ENCODE measurements at regions of chr2 and their contacts with region 1.

Region 1: DNA sequence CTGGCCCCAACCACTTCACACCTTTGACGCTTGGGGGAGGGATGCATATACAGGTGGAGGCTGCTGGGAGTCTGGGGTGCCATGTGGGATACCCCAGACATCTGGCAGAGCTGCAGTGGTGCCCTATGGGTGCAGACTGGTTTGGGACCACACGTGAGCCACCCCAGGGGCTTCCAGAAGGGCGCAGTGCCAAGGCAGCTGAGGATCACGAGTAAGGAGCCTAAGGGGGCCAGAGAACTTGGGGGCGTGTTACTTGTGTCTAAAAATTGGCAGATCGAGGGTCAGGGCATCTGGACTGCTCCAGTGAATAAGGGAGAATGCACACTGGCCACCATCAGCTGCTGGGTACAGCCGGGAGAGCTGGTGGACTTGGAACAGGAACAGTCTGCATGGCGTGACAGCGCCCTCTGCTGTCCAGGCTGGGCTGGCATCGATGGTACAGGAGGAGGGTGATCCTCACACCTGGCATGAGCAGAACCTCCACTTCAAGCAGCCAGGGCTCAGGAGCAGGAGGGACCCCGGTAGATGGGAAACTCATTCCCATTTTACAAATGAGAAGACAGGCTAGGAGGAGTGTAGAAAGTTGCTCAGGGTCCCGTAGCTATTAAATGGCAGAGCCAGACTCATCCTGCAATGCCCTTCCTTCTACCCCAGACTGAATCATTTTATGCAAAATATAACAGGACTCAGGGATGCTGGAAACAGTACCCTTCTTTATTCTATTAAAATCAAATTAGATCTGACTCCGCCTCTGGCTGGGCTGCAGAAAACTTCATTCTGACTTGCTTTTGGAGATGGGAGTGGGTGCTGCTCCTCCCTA is 60.4 kb downstream of the ATOH8 start:
- DNase-seq: peak; percentile 90 to 93 (median 91)
- ATAC-seq: peak; percentile 98 to 99 (median 99)
- H3K4me3 ChIP-seq: no peak overlapping the region
- H3K27ac ChIP-seq: no peak overlapping the region
- H3K4me1 ChIP-seq: peaks cover 0 to 4% (median 0%) of the 10 kb centered on the region in 4 donors
- H3K27me3 ChIP-seq: no peaks in the 10 kb centered on the region
- CTCF ChIP-seq: peak; percentile 96 to 98 (median 98)
- POLR2A ChIP-seq: no peak

Region 2: GRCh38 chr2:85635636-85636035 is 178.6 kb before region 1 on chr2:
- intact Hi-C with region 1: loop called in 1 of 2 experiments (anchors 10 kb)
- DNase-seq: no peak
- ATAC-seq: no peak
- H3K4me3 ChIP-seq: no peak overlapping the region
- H3K27ac ChIP-seq: no peak overlapping the region
- H3K4me1 ChIP-seq: no peaks in the 10 kb centered on the region
- H3K27me3 ChIP-seq: no peaks in the 10 kb centered on the region
- CTCF ChIP-seq: no peak
- POLR2A ChIP-seq: no peak

Region 3: GRCh38 chr2:85733121-85733960 is 80.9 kb before region 1 on chr2:
- intact Hi-C with region 1: loop called in 1 of 2 experiments (anchors 5 kb)
- DNase-seq: no peak
- ATAC-seq: no peak
- H3K4me3 ChIP-seq: no peak overlapping the region
- H3K27ac ChIP-seq: no peak overlapping the region
- H3K4me1 ChIP-seq: peaks cover 0 to 16% (median 7%) of the 10 kb centered on the region in 4 donors
- H3K27me3 ChIP-seq: no peaks in the 10 kb centered on the region
- CTCF ChIP-seq: no peak
- POLR2A ChIP-seq: no peak

Region 4: DNA sequence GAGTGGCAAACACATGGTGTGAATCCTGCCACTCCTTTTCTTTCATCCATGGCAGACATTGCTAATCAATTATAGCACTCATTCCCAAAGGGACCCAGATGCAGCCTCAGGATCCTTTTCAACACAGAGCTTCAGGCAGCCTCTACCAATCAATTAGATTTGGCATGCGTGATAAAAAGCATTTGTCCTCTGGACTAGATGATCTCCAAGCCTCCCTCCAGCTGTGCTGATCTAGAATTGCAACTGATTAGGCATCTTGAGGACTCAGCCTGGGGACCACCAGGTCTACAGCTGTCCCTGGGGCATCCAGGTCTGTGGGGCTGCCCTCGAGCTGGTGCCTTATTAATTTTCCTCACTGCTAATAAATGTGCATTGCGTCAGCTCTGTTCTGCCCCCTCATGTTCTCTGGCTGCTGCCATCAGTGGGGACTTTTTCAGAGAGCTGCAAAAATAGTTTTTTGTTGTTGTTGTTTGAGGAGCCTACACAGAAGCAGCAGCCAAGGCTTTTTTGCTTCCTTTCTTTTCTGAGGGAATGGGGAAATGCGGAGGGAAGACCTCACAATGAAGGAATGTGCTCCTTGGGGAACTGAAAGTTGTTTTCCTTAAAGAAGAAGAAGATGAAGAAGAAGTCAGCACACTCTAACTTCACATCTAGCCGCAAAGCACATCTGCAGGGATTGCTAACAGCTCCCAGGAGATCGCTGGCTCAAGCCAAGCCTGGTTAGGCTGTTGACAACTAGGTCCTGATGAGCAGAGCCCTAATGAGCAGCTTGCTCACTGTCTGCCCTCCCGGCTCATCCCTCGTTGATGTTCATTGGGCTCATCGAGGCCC is 69.2 kb before region 1 on chr2:
- intact Hi-C with region 1: loop called in 1 of 2 experiments (anchors 5 kb)
- DNase-seq: peak in 1 of 3 donors; percentile 30
- ATAC-seq: no peak
- H3K4me3 ChIP-seq: no peak overlapping the region
- H3K27ac ChIP-seq: no peak overlapping the region
- H3K4me1 ChIP-seq: peaks cover 0 to 37% (median 18%) of the 10 kb centered on the region in 4 donors
- H3K27me3 ChIP-seq: no peaks in the 10 kb centered on the region
- CTCF ChIP-seq: no peak
- POLR2A ChIP-seq: no peak

Measured in right lobe of liver (tissue), 6 donors.